ENCODE measurements at regions of chr2 and their contacts with region 1.

Region 1: DNA sequence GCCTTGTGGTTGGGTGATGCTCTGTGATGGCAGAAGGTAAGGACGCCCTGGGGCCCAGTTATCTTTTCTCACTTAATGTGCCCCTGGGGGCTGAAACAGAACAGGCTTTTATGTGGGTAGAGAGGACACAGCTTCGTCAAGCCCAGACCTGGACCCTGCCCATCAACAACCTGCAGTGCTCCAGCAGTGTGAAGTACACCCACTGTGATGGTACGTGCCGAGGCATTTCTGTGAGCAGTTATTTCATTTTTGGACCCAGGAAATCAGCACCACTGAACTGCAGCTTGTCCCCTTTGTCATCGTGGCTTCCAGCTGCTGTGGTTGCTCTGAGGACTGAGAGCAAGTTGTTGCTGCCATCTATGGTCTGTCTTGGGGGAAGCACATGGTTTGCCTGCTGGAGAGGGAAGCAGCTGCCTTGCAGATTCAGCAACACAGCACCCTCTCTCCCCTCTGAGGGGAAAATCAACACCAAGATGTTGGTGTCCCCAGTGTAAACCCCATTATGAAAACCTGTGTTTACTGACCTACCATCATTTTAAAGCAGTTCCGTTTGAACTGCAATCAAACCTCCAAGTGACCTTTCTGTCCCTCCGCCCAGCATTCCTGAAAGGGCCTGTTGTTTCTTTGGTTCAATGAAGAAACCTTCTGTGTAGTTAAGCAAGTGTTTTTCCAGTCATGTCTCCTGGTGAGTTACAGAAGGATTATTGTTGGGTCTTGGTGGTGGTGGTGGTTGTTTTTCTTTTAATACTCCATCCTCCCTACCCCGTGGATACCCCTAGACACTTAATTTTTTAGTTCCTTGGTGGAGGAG is 158.2 kb downstream of the MGAT5 start:
- DNase-seq: peak; percentile 37 to 82
- ATAC-seq: peak; percentile 88 to 98 (median 96)
- H3K4me3 ChIP-seq: no peak overlapping the region
- H3K27ac ChIP-seq: peak overlapping the region in 8 of 10 donors; percentile 20 to 70 (median 49)
- H3K4me1 ChIP-seq: peaks cover 12 to 53% (median 44%) of the 10 kb centered on the region in 9 donors
- H3K27me3 ChIP-seq: no peaks in the 10 kb centered on the region
- CTCF ChIP-seq: peak; percentile 40 to 85 (median 74)

Region 2: GRCh38 chr2:134232868-134233727 is 178.9 kb before region 1 on chr2:
- intact Hi-C with region 1: loop called in 1 of 10 experiments (anchors 10 kb)
- DNase-seq: no peak
- ATAC-seq: peak in 3 of 8 donors; percentile 15 to 37 (median 19)
- H3K4me3 ChIP-seq: no peak overlapping the region
- H3K27ac ChIP-seq: peak overlapping the region in 1 of 10 donors; percentile 67
- H3K4me1 ChIP-seq: peaks cover 0 to 63% (median 39%) of the 10 kb centered on the region in 9 donors
- H3K27me3 ChIP-seq: no peaks in the 10 kb centered on the region
- CTCF ChIP-seq: peak in 1 of 9 donors; percentile 6

Region 3: GRCh38 chr2:134245340-134245984 is 166.6 kb before region 1 on chr2:
- intact Hi-C with region 1: loop called in 6 of 10 experiments (anchors 2 to 10 kb)
- DNase-seq: peak; percentile 55 to 84
- ATAC-seq: peak in 7 of 8 donors; percentile 53 to 79 (median 68)
- H3K4me3 ChIP-seq: no peak overlapping the region
- H3K27ac ChIP-seq: peak overlapping the region in 2 of 10 donors; percentile 24 to 56
- H3K4me1 ChIP-seq: peaks cover 6 to 91% (median 70%) of the 10 kb centered on the region in 9 donors
- H3K27me3 ChIP-seq: no peaks in the 10 kb centered on the region
- CTCF ChIP-seq: peak; percentile 52 to 83 (median 78)

Region 4: GRCh38 chr2:134261398-134262131 is 150.5 kb before region 1 on chr2:
- intact Hi-C with region 1: loop called in 1 of 10 experiments (anchors 5 kb)
- DNase-seq: no peak
- ATAC-seq: peak in 7 of 8 donors; percentile 25 to 73 (median 63)
- H3K4me3 ChIP-seq: no peak overlapping the region
- H3K27ac ChIP-seq: peak overlapping the region; percentile 45 to 82 (median 78)
- H3K4me1 ChIP-seq: peaks cover 33 to 75% (median 63%) of the 10 kb centered on the region in 9 donors
- H3K27me3 ChIP-seq: no peaks in the 10 kb centered on the region
- CTCF ChIP-seq: no peak

Region 5: GRCh38 chr2:134301099-134301927 is 110.7 kb before region 1 on chr2:
- intact Hi-C with region 1: no loop called
- DNase-seq: no peak
- ATAC-seq: peak; percentile 77 to 93 (median 87)
- H3K4me3 ChIP-seq: peak overlapping the region in 4 of 10 donors; percentile 5 to 25 (median 21)
- H3K27ac ChIP-seq: peak overlapping the region in 9 of 10 donors; percentile 45 to 87 (median 67)
- H3K4me1 ChIP-seq: peaks cover 0 to 66% (median 36%) of the 10 kb centered on the region in 9 donors
- H3K27me3 ChIP-seq: no peaks in the 10 kb centered on the region
- CTCF ChIP-seq: no peak

Region 6: DNA sequence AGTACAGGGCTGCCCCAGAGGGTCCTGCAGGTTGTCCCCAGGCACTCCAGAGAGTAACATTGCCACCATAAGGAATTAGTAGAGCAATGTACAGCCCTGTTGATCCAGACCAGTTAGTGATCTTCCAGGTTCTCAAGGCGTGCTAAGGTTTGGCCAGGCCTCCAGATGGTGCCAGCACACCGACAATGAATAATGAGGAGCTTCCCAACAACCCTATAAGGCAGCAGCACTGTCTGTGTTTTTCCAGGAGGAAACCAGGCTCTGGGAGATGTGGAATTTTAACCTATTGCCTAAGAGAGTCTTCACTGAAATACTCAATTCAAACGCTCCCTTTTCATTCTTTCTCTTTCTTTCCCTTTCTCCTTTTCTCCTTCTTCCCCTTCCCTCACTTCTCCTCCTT is 36.1 kb before region 1 on chr2:
- intact Hi-C with region 1: loop called in 1 of 10 experiments (anchors 5 kb)
- DNase-seq: no peak
- ATAC-seq: peak in 6 of 8 donors; percentile 35 to 69 (median 53)
- H3K4me3 ChIP-seq: no peak overlapping the region
- H3K27ac ChIP-seq: peak overlapping the region in 4 of 10 donors; percentile 2 to 34 (median 19)
- H3K4me1 ChIP-seq: peaks cover 8 to 82% (median 54%) of the 10 kb centered on the region in 9 donors
- H3K27me3 ChIP-seq: no peaks in the 10 kb centered on the region
- CTCF ChIP-seq: peak in 7 of 9 donors; percentile 22 to 59 (median 37)

Region 7: DNA sequence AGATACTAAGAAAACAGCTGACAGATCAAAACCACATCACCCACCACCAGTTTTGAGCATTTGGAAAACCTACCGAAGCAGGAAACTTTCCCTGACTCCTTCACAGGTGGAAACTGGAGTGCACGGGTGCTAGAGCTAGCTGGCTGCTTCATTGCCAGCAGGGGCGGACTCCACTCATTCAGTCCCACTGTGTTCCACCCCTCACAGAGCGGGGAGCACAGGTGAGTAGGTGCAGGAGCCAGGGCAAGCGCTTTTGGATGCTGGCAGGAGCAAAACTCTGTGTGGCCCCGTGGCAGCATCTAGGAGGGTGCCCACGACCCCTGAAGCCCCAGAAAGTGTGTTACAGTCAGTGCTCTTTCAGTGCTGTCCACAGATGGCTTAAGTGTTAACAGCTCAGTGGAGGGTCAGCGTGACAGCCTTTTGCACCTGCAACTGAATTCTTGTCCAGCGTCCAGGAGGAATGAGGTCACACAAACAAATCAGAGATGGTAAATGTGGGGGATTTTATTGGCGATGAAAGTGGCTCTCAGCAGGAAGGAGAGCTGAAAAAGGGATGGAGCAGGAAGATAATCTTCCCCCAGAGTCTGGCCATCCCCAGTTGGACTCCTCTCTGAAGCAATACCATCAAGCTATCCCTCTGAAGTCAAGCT is 235.7 kb after region 1 on chr2:
- intact Hi-C with region 1: no loop called
- DNase-seq: no peak
- ATAC-seq: no peak
- H3K4me3 ChIP-seq: no peak overlapping the region
- H3K27ac ChIP-seq: no peak overlapping the region
- H3K4me1 ChIP-seq: no peaks in the 10 kb centered on the region
- H3K27me3 ChIP-seq: no peaks in the 10 kb centered on the region
- CTCF ChIP-seq: no peak